HepG2 (cell line): ENCODE measurements at regions of chr1 and their contacts with region 1.

Region 1: GRCh38 chr1:228515200-228515834 is 28.1 kb downstream of the RNF187 start:
- DNase-seq: peak; percentile 17
- ATAC-seq: peak; percentile 27; the same call in 1 of the 3 replicates
- H3K4me3 ChIP-seq: no peak overlapping the region
- H3K27ac ChIP-seq: no peak overlapping the region
- H3K4me1 ChIP-seq: no peaks in the 10 kb centered on the region
- H3K27me3 ChIP-seq: peaks cover 0 to 27% of the 10 kb centered on the region in 2 experiments; a peak in 3 of 5 replicates
- CTCF ChIP-seq: peak; percentile 65
- EP300 ChIP-seq: no peak
- POLR2A ChIP-seq: no peak
- RAD21 ChIP-seq: peak; percentile 74

Region 2: DNA sequence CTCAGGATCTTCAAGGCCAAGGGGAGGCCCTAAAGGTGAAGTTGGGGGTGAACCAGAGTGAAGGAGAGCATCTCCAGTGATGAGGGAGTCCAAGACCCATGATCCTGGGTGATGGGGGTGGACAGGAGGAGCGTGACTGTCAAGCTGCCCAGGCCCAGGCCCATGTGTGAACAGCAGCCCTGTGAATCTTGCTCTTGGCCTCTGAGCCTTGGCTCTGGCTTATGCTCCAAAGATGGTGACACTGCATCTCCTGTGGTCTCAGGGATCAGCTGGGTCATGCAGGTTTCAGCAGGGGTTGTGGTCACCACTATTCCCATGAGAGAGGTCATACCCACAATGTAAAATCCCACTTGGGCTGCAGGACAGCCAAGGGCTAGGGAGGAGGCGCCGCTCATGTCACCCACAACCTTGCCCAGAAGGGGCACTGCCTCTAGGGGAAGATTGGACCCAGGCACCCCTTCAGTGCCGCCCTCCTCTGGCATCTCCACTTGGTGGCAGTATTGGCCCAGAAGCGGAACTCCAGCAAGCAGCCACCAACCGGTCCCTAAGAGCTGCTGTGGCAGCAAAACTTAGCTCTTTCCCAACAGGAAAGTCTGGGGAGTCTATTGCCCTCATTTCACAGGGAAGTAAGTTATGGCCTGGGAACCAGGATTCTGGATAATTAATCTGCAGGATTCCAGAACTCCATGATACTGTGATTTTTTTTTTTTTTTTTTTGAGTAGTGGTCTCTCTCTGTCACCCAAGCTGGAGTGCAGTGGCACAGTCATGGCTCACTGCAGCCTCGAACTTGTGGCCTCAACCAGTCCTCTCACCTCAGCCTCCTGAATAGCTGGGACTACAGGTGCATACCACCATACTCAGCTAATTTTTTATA is 516.0 kb before region 1 on chr1:
- CTCF ChIA-PET with region 1: no interaction called
- POLR2A ChIA-PET with region 1: no interaction called
- in situ Hi-C with region 1: no loop called
- intact Hi-C with region 1: loop called (anchors 5 kb)
- DNase-seq: peak; percentile 65
- ATAC-seq: peak; percentile 94
- H3K4me3 ChIP-seq: no peak overlapping the region
- H3K27ac ChIP-seq: no peak overlapping the region
- H3K4me1 ChIP-seq: no peaks in the 10 kb centered on the region
- H3K27me3 ChIP-seq: peaks cover 4 to 18% of the 10 kb centered on the region in 2 experiments; a peak in 4 of 5 replicates
- CTCF ChIP-seq: peak; percentile 81
- EP300 ChIP-seq: no peak
- POLR2A ChIP-seq: no peak
- RAD21 ChIP-seq: peak; percentile 87

Region 3: DNA sequence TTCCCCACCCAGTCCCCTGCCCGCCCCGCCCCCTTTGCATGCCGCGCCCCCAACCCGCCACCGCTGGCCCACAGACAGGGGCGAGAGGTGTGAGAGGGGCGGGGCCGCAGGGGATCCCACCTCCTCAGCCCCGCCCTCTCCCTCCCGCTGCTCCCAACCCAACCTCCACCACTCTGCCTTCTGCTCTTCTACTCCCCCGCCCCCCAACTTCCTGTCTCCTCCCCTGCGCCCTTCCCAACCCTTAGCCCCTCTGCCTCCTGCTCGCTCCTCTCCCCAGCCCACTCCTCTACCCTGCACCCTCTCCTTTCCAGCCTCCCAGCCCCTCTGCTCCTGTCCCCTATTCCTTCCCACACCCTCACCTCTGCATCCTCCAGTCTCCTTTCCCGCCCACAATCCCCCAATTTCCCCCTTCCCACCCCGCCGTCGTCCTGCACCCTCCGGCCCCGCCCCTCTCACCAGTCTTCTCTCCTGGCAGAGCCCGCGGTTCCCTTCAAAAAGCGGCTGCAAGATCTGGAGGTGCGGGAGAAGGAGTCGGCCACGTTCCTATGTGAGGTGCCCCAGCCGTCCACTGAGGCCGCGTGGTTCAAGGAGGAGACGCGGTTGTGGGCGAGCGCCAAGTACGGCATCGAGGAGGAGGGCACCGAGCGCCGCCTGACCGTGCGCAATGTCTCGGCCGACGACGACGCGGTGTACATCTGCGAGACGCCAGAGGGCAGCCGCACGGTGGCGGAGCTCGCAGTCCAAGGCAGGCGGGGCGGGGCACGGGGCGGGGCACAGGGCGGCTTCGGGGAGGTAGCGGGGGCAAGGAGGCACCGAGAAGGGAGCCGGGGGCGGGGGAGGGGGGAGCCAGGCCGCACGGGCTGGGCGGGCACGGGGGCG is 302.1 kb before region 1 on chr1:
- CTCF ChIA-PET with region 1: interaction called, 10 read pairs
- POLR2A ChIA-PET with region 1: no interaction called
- in situ Hi-C with region 1: no loop called
- intact Hi-C with region 1: no loop called
- DNase-seq: peak; percentile 25
- ATAC-seq: peak; percentile 86
- H3K4me3 ChIP-seq: peak overlapping the region in 2 of 3 experiments; percentile 45 to 58; a peak in 2 of 6 replicates
- H3K27ac ChIP-seq: no peak overlapping the region
- H3K4me1 ChIP-seq: no peaks in the 10 kb centered on the region
- H3K27me3 ChIP-seq: peaks cover 4 to 34% of the 10 kb centered on the region in 2 experiments
- CTCF ChIP-seq: peak; percentile 89
- EP300 ChIP-seq: no peak
- POLR2A ChIP-seq: no peak
- RAD21 ChIP-seq: 0 out of 2 replicates have a peak, but pooled peaks have one; percentile 57

Region 4: GRCh38 chr1:228226956-228227791 is 288.1 kb before region 1 on chr1:
- CTCF ChIA-PET with region 1: interaction called, 6 read pairs
- POLR2A ChIA-PET with region 1: no interaction called
- in situ Hi-C with region 1: no loop called
- intact Hi-C with region 1: loop called (anchors 5 kb)
- DNase-seq: peak; percentile 48
- ATAC-seq: peak; percentile 94
- H3K4me3 ChIP-seq: peak overlapping the region in 2 of 3 experiments; percentile 24 to 53; a peak in 3 of 6 replicates
- H3K27ac ChIP-seq: no peak overlapping the region
- H3K4me1 ChIP-seq: peaks cover 29% of the 10 kb centered on the region
- H3K27me3 ChIP-seq: no peaks in the 10 kb centered on the region; a peak in 1 of 5 replicates
- CTCF ChIP-seq: peak; percentile 63
- EP300 ChIP-seq: no peak
- POLR2A ChIP-seq: no peak
- RAD21 ChIP-seq: no peak

Region 5: DNA sequence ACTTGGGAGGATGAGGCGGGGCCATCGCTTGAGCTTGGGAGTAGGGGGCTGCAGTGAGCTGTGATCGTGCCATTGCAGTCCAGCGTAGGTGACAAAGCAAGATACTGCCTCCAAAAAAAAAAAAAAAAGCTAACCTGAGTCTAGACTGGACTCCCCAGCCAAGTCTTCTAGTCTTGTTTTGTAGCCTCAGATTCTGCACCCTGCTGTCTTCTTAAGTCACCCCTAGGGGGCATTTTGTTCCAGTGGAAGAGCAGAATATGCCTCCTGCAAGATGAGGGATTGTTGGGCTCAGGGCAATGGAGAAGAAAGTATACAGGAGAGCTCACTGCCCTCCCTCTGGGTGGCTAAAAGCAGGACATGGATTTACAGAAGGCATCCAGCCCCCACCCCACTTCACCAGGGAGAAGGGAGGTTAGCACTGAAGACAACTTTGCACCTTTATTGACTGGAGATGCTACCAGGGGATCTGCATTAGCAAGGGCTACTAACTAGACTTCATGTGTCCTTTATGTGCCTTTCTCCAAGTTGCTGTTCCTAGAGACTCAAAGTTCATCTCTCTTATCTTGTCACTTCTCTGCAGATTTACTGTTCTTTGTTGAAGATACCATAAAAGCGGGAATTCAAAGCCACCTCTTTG is 43.4 kb before region 1 on chr1:
- CTCF ChIA-PET with region 1: interaction called, 13 read pairs
- POLR2A ChIA-PET with region 1: no interaction called
- in situ Hi-C with region 1: no loop called
- intact Hi-C with region 1: no loop called
- DNase-seq: peak; percentile 45
- ATAC-seq: peak; percentile 85
- H3K4me3 ChIP-seq: no peak overlapping the region
- H3K27ac ChIP-seq: no peak overlapping the region
- H3K4me1 ChIP-seq: peaks cover 15% of the 10 kb centered on the region; the same call in 1 of the 2 replicates
- H3K27me3 ChIP-seq: peaks cover 1 to 12% of the 10 kb centered on the region in 2 experiments; a peak in 2 of 5 replicates
- CTCF ChIP-seq: peak; percentile 64
- EP300 ChIP-seq: no peak
- POLR2A ChIP-seq: no peak
- RAD21 ChIP-seq: no peak

Region 6: GRCh38 chr1:228500901-228501871 is 14.1 kb before region 1 on chr1:
- CTCF ChIA-PET with region 1: interaction called, 11 read pairs
- POLR2A ChIA-PET with region 1: no interaction called
- in situ Hi-C with region 1: no loop called
- intact Hi-C with region 1: loop called (anchors 1 kb)
- DNase-seq: peak; percentile 76
- ATAC-seq: peak; percentile 90
- H3K4me3 ChIP-seq: peak overlapping the region; percentile 2 to 53 (median 24); a peak in 5 of 6 replicates
- H3K27ac ChIP-seq: no peak overlapping the region
- H3K4me1 ChIP-seq: peaks cover 18% of the 10 kb centered on the region
- H3K27me3 ChIP-seq: peaks cover 0 to 1% of the 10 kb centered on the region in 2 experiments; a peak in 1 of 5 replicates
- CTCF ChIP-seq: peak; percentile 90
- EP300 ChIP-seq: no peak
- POLR2A ChIP-seq: no peak
- RAD21 ChIP-seq: peak; percentile 57; the same call in 1 of the 2 replicates